ENCODE measurements at regions of chrX and their contacts with region 1.

Region 1: GRCh38 chrX:154013614-154014360 is 5.9 kb downstream of the IRAK1 start:
- DNase-seq: peak; percentile 34
- H3K4me3 ChIP-seq: no peak overlapping the region
- H3K27ac ChIP-seq: no peak overlapping the region
- H3K4me1 ChIP-seq: peaks cover 15% of the 10 kb centered on the region
- H3K27me3 ChIP-seq: no peaks in the 10 kb centered on the region
- CTCF ChIP-seq: peak; percentile 66 to 83
- POLR2A ChIP-seq: no peak

Region 2: GRCh38 chrX:154025230-154025629 is 11.4 kb after region 1 on chrX:
- CTCF ChIA-PET with region 1: interaction called, 16 read pairs
- POLR2A ChIA-PET with region 1: no interaction called
- dilution Hi-C with region 1: no loop called
- intact Hi-C with region 1: no loop called
- DNase-seq: no peak
- H3K4me3 ChIP-seq: no peak overlapping the region
- H3K27ac ChIP-seq: no peak overlapping the region
- H3K4me1 ChIP-seq: peaks cover 14% of the 10 kb centered on the region
- H3K27me3 ChIP-seq: no peaks in the 10 kb centered on the region
- CTCF ChIP-seq: no peak
- POLR2A ChIP-seq: no peak

Region 3: DNA sequence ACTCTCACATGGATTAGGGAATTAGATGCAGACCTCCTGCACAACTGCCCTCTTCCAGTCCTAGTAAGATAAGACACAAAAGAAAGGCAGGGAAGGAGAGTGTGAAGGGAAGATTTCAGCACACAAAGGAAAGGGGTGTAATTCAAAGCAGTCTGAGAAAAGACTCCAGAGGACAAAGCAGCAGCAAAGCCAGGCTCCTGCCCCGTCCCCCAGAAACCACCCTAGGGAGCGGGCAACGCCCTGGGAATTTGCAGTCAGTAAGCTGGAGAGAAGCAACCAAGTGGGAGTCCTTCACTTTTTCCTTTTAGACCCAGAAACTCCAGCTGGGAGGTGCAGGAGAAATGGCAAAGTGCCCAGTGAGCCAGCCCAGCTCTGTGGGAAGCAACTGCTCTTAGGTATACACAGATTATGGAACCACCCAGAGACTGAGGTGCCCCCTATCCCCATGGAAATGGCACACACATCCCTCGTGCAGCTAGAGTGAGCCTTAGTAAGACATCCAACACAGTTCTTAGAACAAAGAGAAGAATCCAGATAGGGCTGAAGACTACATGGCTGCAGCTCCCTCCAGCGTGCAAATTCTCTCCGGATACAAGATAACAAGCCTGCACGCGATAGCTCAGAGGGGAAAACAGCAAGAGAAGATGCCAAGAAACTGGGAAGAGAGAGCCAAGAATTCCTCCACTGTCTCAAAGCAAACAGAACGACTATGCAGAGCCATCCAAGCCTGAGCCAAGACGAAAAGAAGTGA is 32.4 kb after region 1 on chrX:
- CTCF ChIA-PET with region 1: interaction called, 39 read pairs
- POLR2A ChIA-PET with region 1: no interaction called
- dilution Hi-C with region 1: no loop called
- intact Hi-C with region 1: loop called (anchors 1 kb)
- DNase-seq: peak; percentile 93
- H3K4me3 ChIP-seq: no peak overlapping the region
- H3K27ac ChIP-seq: peak overlapping the region; percentile 87
- H3K4me1 ChIP-seq: peaks cover 32% of the 10 kb centered on the region
- H3K27me3 ChIP-seq: no peaks in the 10 kb centered on the region
- CTCF ChIP-seq: peak in 1 of 2 donors; percentile 15
- POLR2A ChIP-seq: no peak

Region 4: DNA sequence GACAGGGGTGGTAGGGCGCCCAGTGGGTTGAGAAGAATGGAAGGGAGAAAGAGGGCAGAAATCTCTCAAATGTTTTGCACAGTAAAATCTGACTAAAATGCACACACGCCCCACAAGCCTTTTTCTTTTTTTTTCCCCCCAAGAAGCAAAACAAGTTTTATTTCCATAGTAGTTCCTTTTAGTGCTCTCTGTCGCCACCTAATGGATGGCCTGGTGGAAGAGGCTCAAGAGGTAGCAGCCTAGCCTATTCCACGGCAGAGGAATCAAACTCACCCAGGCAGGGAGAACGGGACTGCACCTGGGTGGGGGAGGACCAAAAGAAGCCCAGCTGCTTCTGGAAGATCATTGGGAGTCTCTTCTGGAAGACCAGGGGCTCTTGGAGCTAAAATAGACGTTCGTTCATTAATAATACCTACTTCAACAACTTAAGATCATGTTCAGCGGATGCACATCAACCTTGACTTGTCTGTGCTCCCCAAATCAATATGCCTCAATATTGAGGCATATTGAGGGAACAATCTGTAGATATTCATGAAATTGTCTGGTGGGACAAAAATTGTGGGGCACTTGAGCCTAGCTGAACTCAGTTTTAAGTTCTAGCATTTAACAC is 37.5 kb after region 1 on chrX:
- CTCF ChIA-PET with region 1: interaction called, 39 read pairs
- POLR2A ChIA-PET with region 1: no interaction called
- dilution Hi-C with region 1: no loop called
- intact Hi-C with region 1: loop called (anchors 1 kb)
- DNase-seq: peak; percentile 55
- H3K4me3 ChIP-seq: no peak overlapping the region
- H3K27ac ChIP-seq: no peak overlapping the region
- H3K4me1 ChIP-seq: peaks cover 18% of the 10 kb centered on the region
- H3K27me3 ChIP-seq: no peaks in the 10 kb centered on the region
- CTCF ChIP-seq: peak; percentile 37 to 62
- POLR2A ChIP-seq: no peak

Region 5: DNA sequence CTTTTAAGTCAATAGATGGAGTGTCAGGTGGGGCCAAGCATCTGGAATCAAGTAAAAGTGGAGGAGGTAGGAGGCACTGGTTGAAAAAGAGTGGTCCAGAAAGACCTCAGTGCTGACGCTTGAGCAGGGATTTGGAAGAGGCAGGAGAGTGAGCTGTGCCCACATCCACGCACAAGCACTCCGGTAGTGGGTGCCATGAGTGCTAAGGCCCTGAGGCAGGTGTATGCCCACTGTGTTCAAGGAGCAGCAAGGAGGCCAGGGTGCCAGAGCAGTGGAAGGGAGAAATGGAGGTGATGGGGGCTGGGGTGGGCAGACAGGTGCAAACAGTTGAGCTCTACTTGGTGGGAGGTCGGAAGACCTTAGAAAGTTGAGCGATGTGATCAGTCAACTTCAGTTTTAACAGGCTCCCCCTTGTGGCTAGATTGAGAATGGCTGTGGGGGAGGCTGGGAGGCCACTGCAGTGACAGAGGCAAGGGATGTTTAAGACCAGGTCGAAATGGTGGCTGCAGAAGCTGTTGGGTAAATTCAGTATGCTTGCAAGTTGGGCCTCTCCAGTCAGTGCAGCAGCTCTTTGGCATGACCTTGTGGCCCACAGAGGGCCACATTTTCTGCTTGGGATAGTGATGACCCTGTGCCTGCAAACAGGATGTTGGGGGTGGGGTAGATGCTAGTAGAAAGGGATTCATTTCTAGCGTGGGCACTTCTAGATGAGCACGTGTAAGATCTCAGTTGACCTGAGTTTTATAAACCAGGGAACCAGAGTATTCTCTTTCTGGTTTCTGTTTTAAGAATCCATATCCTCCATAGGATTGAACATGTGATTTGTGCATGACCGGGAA is 294.5 kb after region 1 on chrX:
- CTCF ChIA-PET with region 1: interaction called, 11 read pairs
- POLR2A ChIA-PET with region 1: no interaction called
- dilution Hi-C with region 1: no loop called
- intact Hi-C with region 1: no loop called
- DNase-seq: peak; percentile 53
- H3K4me3 ChIP-seq: no peak overlapping the region
- H3K27ac ChIP-seq: no peak overlapping the region
- H3K4me1 ChIP-seq: no peaks in the 10 kb centered on the region
- H3K27me3 ChIP-seq: no peaks in the 10 kb centered on the region
- CTCF ChIP-seq: peak; percentile 59 to 68
- POLR2A ChIP-seq: no peak

Measured in endothelial cell of umbilical vein (primary cell).